ENCODE measurements at regions of chr2 and their contacts with region 1.

Region 1: GRCh38 chr2:112584134-112584890 is at the start of gene CHCHD5:
- DNase-seq: peak; percentile 92 to 97 (median 96)
- H3K4me3 ChIP-seq: peak within 1 kb of the TSS; percentile 63 to 88
- H3K4me3 Mint-ChIP-seq: peak within 1 kb of the TSS; percentile 95 to 98 (median 96)
- H3K27ac ChIP-seq: peak within 1 kb of the TSS; percentile 79
- H3K27ac Mint-ChIP-seq: peak within 1 kb of the TSS; percentile 94 to 99 (median 98)
- H3K4me1 ChIP-seq: peaks cover 27% of the 10 kb centered on the region
- H3K4me1 Mint-ChIP-seq: peaks cover 19 to 54% (median 31%) of the 10 kb centered on the region in 4 donors
- H3K27me3 ChIP-seq: no peaks in the 10 kb centered on the region
- H3K27me3 Mint-ChIP-seq: no peaks in the 10 kb centered on the region
- total RNA-seq, gene CHCHD5: 23.3 to 24.9 TPM

Region 2: DNA sequence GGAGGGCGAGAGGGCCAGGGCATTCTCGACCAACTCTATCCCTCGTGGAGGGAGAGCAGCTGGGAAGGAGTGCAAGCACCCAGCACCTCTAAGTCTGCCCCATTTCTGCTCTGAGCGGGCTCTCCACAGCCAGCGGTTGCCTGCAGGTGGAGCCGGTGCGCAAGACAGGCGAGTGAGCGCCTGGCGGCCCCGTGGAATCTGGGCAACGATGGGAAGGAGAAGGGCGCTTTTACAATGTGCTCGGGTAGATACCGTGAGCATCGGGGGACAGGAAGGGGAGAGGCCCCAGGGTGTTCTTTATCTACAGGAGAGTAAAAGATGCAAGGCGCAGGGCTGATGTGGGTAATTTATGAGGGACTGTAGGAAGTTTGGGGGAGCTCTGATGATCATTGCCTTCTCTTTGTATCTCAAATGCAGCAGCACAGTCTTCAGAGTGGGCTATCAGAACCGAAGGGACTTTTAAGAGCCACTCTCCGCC is 103.2 kb before region 1 on chr2:
- CTCF ChIA-PET with region 1: interaction called, 27 read pairs
- POLR2A ChIA-PET with region 1: interaction called, 12 read pairs
- intact Hi-C with region 1: loop called (anchors 1 kb)
- DNase-seq: peak; percentile 77 to 86 (median 82)
- H3K4me3 ChIP-seq: peak overlapping the region; percentile 63 to 78
- H3K4me3 Mint-ChIP-seq: peak overlapping the region; percentile 89 to 99 (median 96)
- H3K27ac ChIP-seq: peak overlapping the region; percentile 62
- H3K27ac Mint-ChIP-seq: peak overlapping the region; percentile 84 to 97 (median 95)
- H3K4me1 ChIP-seq: peaks cover 26% of the 10 kb centered on the region
- H3K4me1 Mint-ChIP-seq: peaks cover 17 to 39% (median 25%) of the 10 kb centered on the region in 4 donors
- H3K27me3 ChIP-seq: no peaks in the 10 kb centered on the region
- H3K27me3 Mint-ChIP-seq: no peaks in the 10 kb centered on the region

Region 3: GRCh38 chr2:112529757-112530156 is 54.6 kb before region 1 on chr2:
- CTCF ChIA-PET with region 1: no interaction called
- POLR2A ChIA-PET with region 1: no interaction called
- intact Hi-C with region 1: no loop called
- DNase-seq: no peak
- H3K4me3 ChIP-seq: no peak overlapping the region
- H3K4me3 Mint-ChIP-seq: no peak overlapping the region
- H3K27ac ChIP-seq: no peak overlapping the region
- H3K27ac Mint-ChIP-seq: peak overlapping the region in 1 of 7 donors; percentile 12
- H3K4me1 ChIP-seq: no peaks in the 10 kb centered on the region
- H3K4me1 Mint-ChIP-seq: no peaks in the 10 kb centered on the region
- H3K27me3 ChIP-seq: no peaks in the 10 kb centered on the region
- H3K27me3 Mint-ChIP-seq: no peaks in the 10 kb centered on the region

Region 4: DNA sequence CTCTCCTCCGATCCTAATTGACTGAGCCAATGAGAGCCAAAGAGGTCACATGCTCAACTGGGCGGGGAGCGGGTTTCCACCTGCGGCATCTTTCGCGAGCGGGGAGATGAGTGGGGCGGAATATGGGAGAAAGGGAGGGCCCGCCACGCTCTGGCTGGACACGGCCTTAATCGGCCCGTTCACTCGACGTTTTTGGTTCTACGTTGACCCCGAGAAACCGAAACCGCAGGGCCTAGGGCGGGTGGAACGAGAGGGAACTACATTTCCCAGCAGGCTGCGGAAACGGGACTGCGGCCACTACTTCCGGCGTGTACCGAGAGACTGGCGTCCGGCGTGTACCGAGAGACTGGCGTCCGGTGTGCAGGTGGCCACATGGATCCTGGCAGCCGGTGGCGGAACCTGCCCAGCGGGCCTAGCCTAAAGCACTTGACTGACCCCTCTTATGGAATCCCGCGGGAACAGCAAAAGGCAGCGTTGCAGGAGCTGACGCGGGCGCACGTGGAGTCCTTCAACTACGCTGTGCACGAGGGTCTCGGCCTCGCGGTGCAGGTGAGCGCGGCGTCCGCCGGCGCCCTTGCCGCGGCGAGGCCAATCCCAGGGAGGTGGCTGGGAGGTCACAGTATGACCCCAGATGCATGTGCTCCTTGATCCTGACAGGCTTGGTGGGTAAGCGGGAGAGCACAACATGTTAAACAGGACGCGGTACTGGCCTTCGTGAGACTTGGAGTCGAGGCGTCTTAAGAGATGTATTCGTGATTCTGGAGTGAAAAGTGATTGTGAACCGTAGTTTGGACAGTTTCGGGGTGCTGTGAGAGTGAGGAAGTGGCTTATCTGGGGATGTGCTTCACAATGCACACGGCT is 42.0 kb before region 1 on chr2 and contains the start of gene POLR1B:
- CTCF ChIA-PET with region 1: interaction called, 3 read pairs
- POLR2A ChIA-PET with region 1: interaction called, 27 read pairs
- intact Hi-C with region 1: loop called (anchors 1 kb)
- DNase-seq: peak; percentile 77 to 85 (median 81)
- H3K4me3 ChIP-seq: peak within 1 kb of the TSS; percentile 70 to 98
- H3K4me3 Mint-ChIP-seq: no peak within 1 kb of the TSS
- H3K27ac ChIP-seq: peak within 1 kb of the TSS; percentile 90
- H3K27ac Mint-ChIP-seq: no peak within 1 kb of the TSS
- H3K4me1 ChIP-seq: peaks cover 24% of the 10 kb centered on the region
- H3K4me1 Mint-ChIP-seq: peaks cover 5 to 12% (median 10%) of the 10 kb centered on the region in 4 donors
- H3K27me3 ChIP-seq: no peaks in the 10 kb centered on the region
- H3K27me3 Mint-ChIP-seq: no peaks in the 10 kb centered on the region
- total RNA-seq, gene POLR1B: 29.7 to 31.3 TPM

Region 5: GRCh38 chr2:112601751-112602150 is 17.4 kb after region 1 on chr2:
- CTCF ChIA-PET with region 1: interaction called, 16 read pairs
- POLR2A ChIA-PET with region 1: interaction called, 8 read pairs
- intact Hi-C with region 1: no loop called
- DNase-seq: no peak
- H3K4me3 ChIP-seq: no peak overlapping the region
- H3K4me3 Mint-ChIP-seq: no peak overlapping the region
- H3K27ac ChIP-seq: no peak overlapping the region
- H3K27ac Mint-ChIP-seq: peak overlapping the region in 1 of 7 donors; percentile 77
- H3K4me1 ChIP-seq: peaks cover 6% of the 10 kb centered on the region
- H3K4me1 Mint-ChIP-seq: peaks cover 4 to 5% (median 4%) of the 10 kb centered on the region in 4 donors
- H3K27me3 ChIP-seq: no peaks in the 10 kb centered on the region
- H3K27me3 Mint-ChIP-seq: no peaks in the 10 kb centered on the region

Region 6: DNA sequence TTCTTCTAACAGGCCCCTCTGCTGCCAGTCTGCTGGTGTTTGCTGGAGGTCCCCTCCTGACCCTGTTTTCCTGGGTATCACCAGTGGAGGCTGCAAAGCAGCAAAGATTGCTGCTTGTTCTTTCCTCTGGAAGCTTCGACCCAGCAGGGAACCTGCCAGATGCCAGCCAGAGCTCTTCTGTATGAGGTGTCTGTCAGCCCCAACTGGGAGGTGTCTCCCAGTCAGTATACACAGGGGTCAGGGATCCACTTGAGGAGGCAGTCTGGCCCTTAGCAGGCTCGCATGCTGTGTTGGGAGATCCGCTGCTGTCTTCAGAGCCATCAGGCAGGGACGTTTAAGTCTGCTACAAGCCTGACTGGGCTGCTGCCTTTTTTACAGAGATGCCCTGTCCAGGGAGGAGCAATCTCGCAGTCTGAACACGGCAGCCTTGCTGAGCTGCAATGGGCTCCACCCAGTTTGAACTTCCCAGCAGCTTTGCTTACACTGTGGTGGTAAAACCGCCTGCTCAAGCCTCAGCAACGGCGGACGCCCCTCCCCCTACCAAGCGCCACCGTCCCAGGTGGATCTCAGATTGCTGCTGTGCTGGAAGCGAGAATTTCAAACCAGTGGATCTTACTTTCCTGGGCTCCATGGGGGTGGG is 30.0 kb after region 1 on chr2:
- CTCF ChIA-PET with region 1: no interaction called
- POLR2A ChIA-PET with region 1: no interaction called
- intact Hi-C with region 1: no loop called
- DNase-seq: no peak
- H3K4me3 ChIP-seq: no peak overlapping the region
- H3K4me3 Mint-ChIP-seq: no peak overlapping the region
- H3K27ac ChIP-seq: no peak overlapping the region
- H3K27ac Mint-ChIP-seq: no peak overlapping the region
- H3K4me1 ChIP-seq: no peaks in the 10 kb centered on the region
- H3K4me1 Mint-ChIP-seq: no peaks in the 10 kb centered on the region
- H3K27me3 ChIP-seq: no peaks in the 10 kb centered on the region
- H3K27me3 Mint-ChIP-seq: peaks cover 2 to 3% of the 10 kb centered on the region in 2 donors

Region 7: GRCh38 chr2:112626604-112627059 is 42.3 kb after region 1 on chr2:
- CTCF ChIA-PET with region 1: interaction called, 5 read pairs
- POLR2A ChIA-PET with region 1: interaction called, 12 read pairs
- intact Hi-C with region 1: loop called (anchors 1 kb)
- DNase-seq: peak; percentile 57 to 75 (median 63)
- H3K4me3 ChIP-seq: peak overlapping the region in 1 of 2 donors; percentile 46
- H3K4me3 Mint-ChIP-seq: peak overlapping the region; percentile 69 to 83 (median 78)
- H3K27ac ChIP-seq: peak overlapping the region; percentile 15
- H3K27ac Mint-ChIP-seq: peak overlapping the region; percentile 57 to 95 (median 85)
- H3K4me1 ChIP-seq: peaks cover 75% of the 10 kb centered on the region
- H3K4me1 Mint-ChIP-seq: peaks cover 36 to 80% (median 60%) of the 10 kb centered on the region in 4 donors
- H3K27me3 ChIP-seq: no peaks in the 10 kb centered on the region
- H3K27me3 Mint-ChIP-seq: peaks cover 0 to 3% of the 10 kb centered on the region in 2 donors

Region 8: GRCh38 chr2:112645310-112646101 is 61.2 kb after region 1 on chr2 and contains the start of gene SLC20A1:
- CTCF ChIA-PET with region 1: interaction called, 5 read pairs
- POLR2A ChIA-PET with region 1: interaction called, 24 read pairs
- intact Hi-C with region 1: loop called (anchors 1 kb)
- DNase-seq: peak; percentile 96 to 100 (median 99)
- H3K4me3 ChIP-seq: peak within 1 kb of the TSS; percentile 62 to 74
- H3K4me3 Mint-ChIP-seq: peak within 1 kb of the TSS; percentile 91 to 96 (median 92)
- H3K27ac ChIP-seq: peak within 1 kb of the TSS; percentile 90
- H3K27ac Mint-ChIP-seq: peak within 1 kb of the TSS; percentile 80 to 95 (median 94)
- H3K4me1 ChIP-seq: peaks cover 51% of the 10 kb centered on the region
- H3K4me1 Mint-ChIP-seq: peaks cover 36 to 62% (median 47%) of the 10 kb centered on the region in 4 donors
- H3K27me3 ChIP-seq: no peaks in the 10 kb centered on the region
- H3K27me3 Mint-ChIP-seq: no peaks in the 10 kb centered on the region
- total RNA-seq, gene SLC20A1: 93.5 to 94.0 TPM

Region 9: DNA sequence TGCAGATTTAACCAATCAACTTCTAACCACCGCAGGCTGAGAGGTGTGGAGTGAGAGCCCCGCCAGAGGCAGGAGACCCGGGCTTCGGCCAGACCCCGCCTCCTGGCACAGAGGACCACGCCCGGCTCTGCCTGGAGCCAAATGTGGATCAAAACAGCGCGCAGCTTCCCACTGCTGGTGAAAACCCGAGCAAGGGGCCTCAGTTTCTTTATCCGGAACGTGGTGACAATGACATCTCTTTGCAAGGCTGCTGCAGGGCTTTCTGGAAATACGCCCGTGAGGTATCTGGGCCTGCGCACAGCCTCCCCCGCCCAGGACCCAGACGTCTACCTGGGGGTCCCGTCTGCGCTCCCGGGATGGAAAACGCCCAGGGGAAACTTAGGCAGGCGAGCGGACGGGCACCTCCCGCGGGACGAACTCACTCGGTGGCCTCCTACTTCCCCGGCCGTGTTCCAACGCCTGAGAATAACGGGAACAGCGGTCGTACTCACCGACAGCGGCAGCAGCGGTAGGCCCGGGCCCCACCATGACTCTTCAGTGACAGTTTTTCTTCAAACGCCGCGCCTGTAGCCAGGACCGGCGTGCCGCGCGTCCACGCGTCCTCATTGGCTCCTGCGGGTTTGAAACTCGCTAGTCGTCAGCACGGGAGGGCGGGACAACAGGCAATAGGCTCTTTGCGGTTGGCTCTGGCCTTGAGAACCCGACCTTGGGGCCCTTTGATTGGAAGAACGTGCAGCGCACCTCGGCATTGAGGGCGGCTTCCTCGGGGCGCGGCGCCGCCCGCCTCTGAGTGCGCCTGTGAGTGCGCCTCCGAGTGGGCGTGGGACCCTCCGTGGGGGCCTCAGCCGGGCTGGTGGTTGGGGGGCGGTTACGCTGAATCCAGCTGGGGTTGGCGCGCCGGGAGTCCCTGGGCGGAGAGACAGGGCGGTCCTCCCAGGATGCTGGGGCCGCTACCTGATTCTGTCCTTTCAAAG is 180.0 kb after region 1 on chr2 and contains the start of gene CKAP2L:
- CTCF ChIA-PET with region 1: no interaction called
- POLR2A ChIA-PET with region 1: interaction called, 3 read pairs
- intact Hi-C with region 1: loop called (anchors 1 kb)
- DNase-seq: peak; percentile 94 to 98 (median 96)
- H3K4me3 ChIP-seq: peak within 1 kb of the TSS; percentile 39 to 85
- H3K4me3 Mint-ChIP-seq: peak within 1 kb of the TSS; percentile 91 to 98 (median 95)
- H3K27ac ChIP-seq: peak within 1 kb of the TSS; percentile 60
- H3K27ac Mint-ChIP-seq: peak within 1 kb of the TSS; percentile 76 to 96 (median 92)
- H3K4me1 ChIP-seq: peaks cover 29% of the 10 kb centered on the region
- H3K4me1 Mint-ChIP-seq: peaks cover 21 to 49% (median 35%) of the 10 kb centered on the region in 4 donors
- H3K27me3 ChIP-seq: no peaks in the 10 kb centered on the region
- H3K27me3 Mint-ChIP-seq: no peaks in the 10 kb centered on the region
- total RNA-seq, gene CKAP2L: 0.06 TPM in 1 of 2 experiments, not detected in the other